ENCODE measurements at regions of chr3 and their contacts with region 1.

Region 1: DNA sequence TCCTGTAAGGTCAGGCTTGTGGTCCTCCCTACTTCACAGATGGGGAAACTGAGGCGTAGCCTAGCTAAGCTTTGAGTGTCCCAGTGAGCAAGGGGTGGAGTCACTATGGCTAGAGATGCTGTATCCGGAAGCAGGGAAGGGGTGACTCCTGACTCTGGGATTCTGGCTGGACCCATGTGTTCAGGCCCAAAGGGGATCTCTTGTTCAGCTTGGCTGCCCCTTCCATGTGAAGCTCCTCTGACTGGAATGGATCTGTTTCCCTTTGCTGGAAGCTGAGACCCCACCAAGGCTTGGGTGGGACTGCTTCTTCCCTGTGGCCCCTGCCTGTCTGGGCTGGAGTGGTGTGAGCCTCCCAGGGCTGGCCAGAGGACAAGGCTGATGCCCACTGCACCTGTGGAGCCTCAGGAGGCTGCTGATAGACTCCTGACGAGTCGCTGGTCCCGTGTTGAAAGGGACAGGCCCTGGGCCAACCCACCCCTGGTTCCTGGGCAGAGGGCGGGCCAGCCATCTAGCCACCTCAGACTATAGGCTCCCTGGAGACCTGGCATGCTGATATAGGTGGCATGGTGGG is 1.0 kb downstream of the MAPKAPK3 start:
- DNase-seq: peak; percentile 54 to 63
- ATAC-seq: peak in 6 of 8 donors; percentile 5 to 51 (median 26)
- H3K4me3 ChIP-seq: peak overlapping the region; percentile 76 to 98 (median 92)
- H3K27ac ChIP-seq: peak overlapping the region; percentile 85 to 98 (median 96)
- H3K4me1 ChIP-seq: peaks cover 9 to 81% (median 63%) of the 10 kb centered on the region in 9 donors
- H3K27me3 ChIP-seq: no peaks in the 10 kb centered on the region
- CTCF ChIP-seq: no peak

Region 2: DNA sequence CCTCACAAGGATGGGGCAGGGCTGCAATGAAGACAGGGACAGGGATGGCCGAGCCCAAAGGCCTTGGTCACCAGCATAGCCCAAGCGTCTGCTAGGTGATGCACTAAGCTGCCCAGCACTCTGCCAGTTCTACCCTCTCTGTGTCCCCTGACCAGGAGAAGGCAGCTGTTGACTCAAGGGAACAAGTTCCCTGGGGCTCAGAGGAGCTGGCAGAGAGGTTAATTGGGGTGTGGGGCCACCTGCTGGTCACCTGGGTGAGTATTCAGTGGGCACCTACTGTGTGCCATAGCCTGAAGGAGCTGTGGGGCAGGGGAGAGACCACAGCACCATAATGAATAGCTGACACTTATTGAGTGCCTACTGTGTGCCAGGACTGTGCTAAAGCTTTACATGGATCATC is 34.7 kb after region 1 on chr3:
- intact Hi-C with region 1: loop called in 5 of 10 experiments (anchors 1 to 5 kb)
- DNase-seq: peak; percentile 37 to 52
- ATAC-seq: peak in 7 of 8 donors; percentile 7 to 43 (median 26)
- H3K4me3 ChIP-seq: no peak overlapping the region
- H3K27ac ChIP-seq: peak overlapping the region in 6 of 10 donors; percentile 44 to 88 (median 64)
- H3K4me1 ChIP-seq: peaks cover 6 to 50% (median 31%) of the 10 kb centered on the region in 9 donors
- H3K27me3 ChIP-seq: no peaks in the 10 kb centered on the region
- CTCF ChIP-seq: peak in 8 of 9 donors; percentile 28 to 64 (median 52)